Mammary epithelial cell (primary cell): ENCODE measurements at regions of chrX and their contacts with region 1.

Region 1: DNA sequence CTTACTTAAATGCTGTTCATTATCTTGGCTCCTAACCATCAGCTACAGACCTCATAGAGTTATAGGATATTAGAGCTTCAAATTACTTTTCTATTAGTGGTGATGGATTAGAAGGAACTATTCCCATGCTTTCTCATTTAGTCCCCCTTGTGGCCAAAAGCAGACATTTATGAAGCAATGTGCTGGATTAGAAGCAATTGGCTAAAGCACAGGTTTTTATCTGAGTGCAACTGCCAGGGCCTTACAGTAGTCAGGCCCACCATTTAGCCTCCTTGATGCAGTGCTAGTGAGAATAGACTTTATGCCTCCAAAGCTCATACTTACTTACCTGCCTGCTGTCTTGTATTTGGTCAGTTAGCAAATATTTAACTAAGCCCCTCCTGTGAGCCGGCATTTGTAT is 93.0 kb downstream of the TSPAN7 start:
- DNase-seq: peak; percentile 28
- H3K4me3 ChIP-seq: no peak overlapping the region
- H3K27ac ChIP-seq: no peak overlapping the region
- H3K4me1 ChIP-seq: no peaks in the 10 kb centered on the region
- H3K27me3 ChIP-seq: peaks cover 6% of the 10 kb centered on the region
- CTCF ChIP-seq: peak; percentile 59 to 65

Region 2: DNA sequence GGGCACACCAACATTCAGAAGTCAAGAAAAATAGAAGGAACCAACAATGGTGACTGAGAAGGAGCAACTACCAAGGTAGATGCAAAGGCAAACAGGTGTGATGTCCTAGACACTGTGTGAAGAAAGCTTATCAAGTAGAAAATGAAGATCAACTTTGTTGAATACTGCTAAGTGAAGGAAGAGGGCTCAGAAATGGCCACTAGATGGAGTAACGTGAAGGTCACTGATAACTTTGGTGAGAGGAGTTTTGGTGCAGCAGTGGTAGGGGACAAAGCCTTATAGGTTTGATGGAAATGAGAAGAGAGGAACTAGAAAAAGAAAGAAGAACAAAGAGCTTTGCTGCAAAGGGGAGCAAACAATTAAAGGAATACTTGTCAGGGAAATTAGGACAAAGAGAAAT is 278.4 kb before region 1 on chrX:
- CTCF ChIA-PET with region 1: no interaction called
- dilution Hi-C with region 1: no loop called
- in situ Hi-C with region 1: no loop called
- intact Hi-C with region 1: loop called (anchors 5 kb)
- DNase-seq: peak; percentile 1
- H3K4me3 ChIP-seq: no peak overlapping the region
- H3K27ac ChIP-seq: no peak overlapping the region
- H3K4me1 ChIP-seq: no peaks in the 10 kb centered on the region
- H3K27me3 ChIP-seq: peaks cover 2% of the 10 kb centered on the region
- CTCF ChIP-seq: peak; percentile 65 to 67

Region 3: DNA sequence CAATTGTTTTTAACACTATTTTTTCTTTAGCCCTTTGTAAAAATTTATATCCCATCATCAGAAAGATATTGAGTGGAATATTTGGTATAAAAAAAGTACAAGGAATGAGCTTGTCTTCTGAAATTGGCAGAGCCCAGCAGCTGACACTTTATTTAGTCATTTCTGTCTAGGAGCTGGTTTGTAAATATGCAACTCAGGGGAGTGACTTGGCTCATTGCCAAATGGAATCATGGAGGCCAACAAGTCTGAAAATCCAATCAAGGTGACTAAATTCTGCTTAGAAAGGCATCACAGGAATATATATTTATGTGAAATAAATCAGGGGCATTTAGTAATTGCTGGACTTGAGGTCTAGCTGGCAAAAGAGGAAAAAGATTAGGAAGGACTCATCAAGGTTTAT is 227.5 kb before region 1 on chrX:
- CTCF ChIA-PET with region 1: no interaction called
- dilution Hi-C with region 1: no loop called
- in situ Hi-C with region 1: no loop called
- intact Hi-C with region 1: no loop called
- DNase-seq: peak; percentile 43
- H3K4me3 ChIP-seq: no peak overlapping the region
- H3K27ac ChIP-seq: no peak overlapping the region
- H3K4me1 ChIP-seq: no peaks in the 10 kb centered on the region
- H3K27me3 ChIP-seq: peaks cover 7% of the 10 kb centered on the region
- CTCF ChIP-seq: no peak